ENCODE measurements at regions of chr16 and their contacts with region 1.

Region 1: DNA sequence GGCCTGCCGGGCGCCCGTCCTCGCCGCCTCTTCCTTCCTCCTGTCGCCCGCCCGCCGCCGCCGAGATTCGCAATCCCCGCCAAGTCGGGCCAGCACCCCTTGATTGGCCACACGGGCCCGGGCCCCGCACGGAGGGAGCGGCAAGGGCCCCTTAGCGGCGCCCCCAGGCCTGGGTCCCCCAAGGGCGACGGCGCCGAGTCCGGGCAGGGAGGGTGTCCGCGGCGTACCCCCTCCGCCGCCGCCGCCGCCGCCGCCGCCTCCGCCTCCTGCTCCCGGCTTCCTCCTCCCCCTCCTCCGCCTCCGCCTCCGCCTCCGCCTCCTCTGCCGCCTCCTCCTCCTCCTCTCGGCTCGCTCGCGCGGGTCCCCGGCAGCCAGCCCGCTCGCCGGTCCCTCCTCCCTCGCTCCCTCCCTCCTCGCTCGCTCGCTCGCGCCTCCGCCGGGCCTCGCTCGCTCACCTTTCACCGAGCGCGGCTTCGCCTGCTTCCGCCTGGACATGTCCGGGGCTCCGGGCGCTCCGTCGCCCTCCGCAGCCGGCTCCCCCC is 561 bp downstream of the ZNF423 start:
- DNase-seq: peak; percentile 56 to 86
- H3K4me3 ChIP-seq: peak overlapping the region; percentile 52 to 85 (median 67)
- H3K27ac ChIP-seq: peak overlapping the region; percentile 46; the same call in 1 of the 2 replicates
- H3K4me1 ChIP-seq: peaks cover 13 to 31% (median 24%) of the 10 kb centered on the region in 4 experiments
- H3K27me3 ChIP-seq: peaks cover 0 to 28% (median 19%) of the 10 kb centered on the region in 4 experiments; a peak in 5 of 7 replicates
- CTCF ChIP-seq: no peak
- EP300 ChIP-seq: no peak
- POLR2A ChIP-seq: no peak; a peak in 1 of 3 replicates
- RAD21 ChIP-seq: 0 out of 4 replicates have a peak, but pooled peaks of 1 of the 2 experiments have one; percentile 1

Region 2: DNA sequence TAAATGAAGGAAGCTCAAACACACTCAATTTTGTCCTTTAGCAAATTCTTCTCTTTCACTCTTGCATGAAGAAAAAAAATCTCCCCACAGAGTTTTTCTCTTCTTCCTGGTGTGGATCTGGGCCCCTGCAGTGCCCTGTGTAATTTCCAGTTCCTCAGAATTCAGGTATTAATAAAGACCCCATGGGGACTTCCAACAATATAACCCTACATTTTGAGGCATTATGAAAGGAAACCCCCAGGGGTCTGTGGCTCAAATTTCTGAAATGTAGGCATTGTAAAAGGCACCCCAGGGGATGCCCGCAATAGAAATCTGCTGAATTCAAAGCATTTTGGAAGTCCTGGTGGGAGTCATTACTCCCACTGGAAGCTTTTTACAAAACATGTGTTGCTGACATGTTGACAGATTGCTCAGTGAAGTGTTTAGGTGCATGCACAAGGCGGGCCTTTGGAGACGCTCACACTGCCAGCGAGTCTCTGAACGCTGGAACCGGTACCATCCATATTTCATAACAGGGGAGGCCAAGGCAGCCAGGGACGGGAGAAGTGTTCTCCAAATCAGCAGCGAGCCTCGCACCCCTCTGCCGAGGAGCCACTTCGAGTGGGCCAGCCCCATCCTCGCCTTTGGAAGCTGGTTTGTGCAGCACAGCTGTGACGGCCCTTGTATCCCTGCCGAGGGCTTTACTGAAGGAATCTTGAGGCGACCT is 153.4 kb before region 1 on chr16:
- CTCF ChIA-PET with region 1: interaction called, 10 read pairs
- POLR2A ChIA-PET with region 1: no interaction called
- DNase-seq: peak in 1 of 2 experiments; percentile 74
- H3K4me3 ChIP-seq: peak overlapping the region in 3 of 4 experiments; percentile 3 to 47 (median 21); a peak in 4 of 8 replicates
- H3K27ac ChIP-seq: peak overlapping the region; percentile 79; the same call in 1 of the 2 replicates
- H3K4me1 ChIP-seq: peaks cover 51 to 66% (median 57%) of the 10 kb centered on the region in 4 experiments
- H3K27me3 ChIP-seq: no peaks in the 10 kb centered on the region
- CTCF ChIP-seq: no peak
- EP300 ChIP-seq: peak in 1 of 2 experiments; percentile 97; a peak in 2 of 3 replicates
- POLR2A ChIP-seq: no peak
- RAD21 ChIP-seq: no peak

Region 3: DNA sequence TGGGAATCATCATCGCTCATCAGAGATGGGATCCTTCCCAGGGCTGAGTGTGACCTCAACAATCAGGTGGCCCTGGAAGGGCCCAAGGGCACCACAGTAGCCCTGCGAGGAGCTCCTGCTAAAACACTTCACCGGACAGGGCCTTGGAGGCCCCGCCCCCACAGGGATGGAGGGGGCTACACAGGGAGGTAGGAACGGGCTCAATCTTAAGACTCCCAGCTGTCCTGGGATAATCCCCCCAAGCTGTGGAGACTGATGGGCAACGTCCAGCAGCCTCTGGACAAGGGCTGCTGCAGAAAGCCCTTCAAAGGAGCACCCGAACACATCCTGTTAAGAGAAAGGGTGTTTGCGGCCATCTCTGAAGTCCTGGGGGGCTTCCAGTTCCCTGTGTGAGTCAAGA is 59.8 kb before region 1 on chr16:
- CTCF ChIA-PET with region 1: interaction called, 12 read pairs
- POLR2A ChIA-PET with region 1: interaction called, 3 read pairs
- DNase-seq: no peak
- H3K4me3 ChIP-seq: no peak overlapping the region
- H3K27ac ChIP-seq: no peak overlapping the region
- H3K4me1 ChIP-seq: peaks cover 0 to 12% (median 3%) of the 10 kb centered on the region in 4 experiments; a peak in 6 of 7 replicates
- H3K27me3 ChIP-seq: no peaks in the 10 kb centered on the region
- CTCF ChIP-seq: no peak
- EP300 ChIP-seq: no peak
- POLR2A ChIP-seq: no peak
- RAD21 ChIP-seq: no peak

Region 4: GRCh38 chr16:49821614-49822282 is 33.6 kb before region 1 on chr16:
- CTCF ChIA-PET with region 1: interaction called, 17 read pairs
- POLR2A ChIA-PET with region 1: interaction called, 3 read pairs
- DNase-seq: no peak
- H3K4me3 ChIP-seq: no peak overlapping the region
- H3K27ac ChIP-seq: no peak overlapping the region; the same call in 1 of the 2 replicates
- H3K4me1 ChIP-seq: peaks cover 9 to 21% (median 15%) of the 10 kb centered on the region in 4 experiments
- H3K27me3 ChIP-seq: no peaks in the 10 kb centered on the region
- CTCF ChIP-seq: no peak
- EP300 ChIP-seq: no peak
- POLR2A ChIP-seq: no peak
- RAD21 ChIP-seq: no peak

Region 5: DNA sequence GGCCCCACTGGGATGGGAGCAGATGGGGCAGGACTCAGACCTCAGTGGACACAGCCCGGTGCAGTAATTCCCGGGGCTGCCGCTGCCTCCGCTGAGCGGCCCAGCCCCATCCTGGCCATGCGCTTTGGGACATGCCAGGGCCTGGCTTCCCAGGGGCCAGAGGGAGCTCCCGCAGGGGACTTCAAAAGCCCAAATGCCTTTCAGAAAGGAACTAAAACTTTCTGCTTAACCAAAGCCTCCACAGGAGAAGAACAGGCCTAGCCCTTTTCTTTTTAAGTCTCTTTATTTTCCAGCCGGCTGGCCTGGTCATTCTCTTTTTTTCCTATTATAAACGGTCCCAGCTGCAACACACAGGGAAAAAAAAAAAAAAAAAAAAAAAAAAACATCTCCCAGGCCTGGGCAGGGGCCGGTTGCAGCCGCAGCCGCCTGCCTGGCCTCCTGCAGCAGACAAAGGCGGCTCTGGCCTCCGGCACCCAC is 11.3 kb after region 1 on chr16:
- CTCF ChIA-PET with region 1: interaction called, 126 read pairs
- POLR2A ChIA-PET with region 1: interaction called, 5 read pairs
- DNase-seq: peak in 1 of 2 experiments; percentile 63
- H3K4me3 ChIP-seq: peak overlapping the region in 1 of 4 experiments; percentile 2; a peak in 1 of 8 replicates
- H3K27ac ChIP-seq: no peak overlapping the region
- H3K4me1 ChIP-seq: peaks cover 7 to 21% (median 16%) of the 10 kb centered on the region in 4 experiments
- H3K27me3 ChIP-seq: peaks cover 0 to 6% (median 2%) of the 10 kb centered on the region in 4 experiments; a peak in 4 of 7 replicates
- CTCF ChIP-seq: no peak
- EP300 ChIP-seq: no peak
- POLR2A ChIP-seq: no peak
- RAD21 ChIP-seq: peak; percentile 5 to 19; a peak in 1 of 4 replicates

Region 6: DNA sequence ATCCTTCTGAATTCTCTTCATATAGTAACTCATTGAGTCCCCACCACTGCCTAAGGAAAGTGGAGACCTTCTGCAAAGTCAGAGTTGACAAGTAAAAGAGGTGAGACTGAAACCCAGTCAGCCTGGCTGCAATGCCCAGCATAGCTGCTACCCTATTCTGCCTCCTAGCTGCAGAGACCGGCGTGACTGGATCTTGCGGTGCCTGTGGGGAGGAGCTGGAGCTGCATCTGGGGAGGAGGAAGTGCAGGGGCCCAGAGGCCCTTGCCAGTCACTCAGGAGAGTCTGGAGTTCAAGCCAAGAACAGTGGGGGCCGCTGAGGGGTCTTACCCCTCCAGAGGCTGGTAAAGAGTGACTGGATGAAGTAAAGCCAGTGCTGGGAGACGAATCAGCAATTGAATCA is 35.5 kb after region 1 on chr16:
- CTCF ChIA-PET with region 1: interaction called, 31 read pairs
- POLR2A ChIA-PET with region 1: no interaction called
- DNase-seq: peak; percentile 38 to 84
- H3K4me3 ChIP-seq: no peak overlapping the region
- H3K27ac ChIP-seq: no peak overlapping the region
- H3K4me1 ChIP-seq: no peaks in the 10 kb centered on the region; a peak in 1 of 7 replicates
- H3K27me3 ChIP-seq: no peaks in the 10 kb centered on the region; a peak in 1 of 7 replicates
- CTCF ChIP-seq: peak; percentile 92 to 96 (median 93)
- EP300 ChIP-seq: no peak
- POLR2A ChIP-seq: no peak
- RAD21 ChIP-seq: peak; percentile 83 to 87

Region 7: GRCh38 chr16:49921791-49922456 is 66.6 kb after region 1 on chr16:
- CTCF ChIA-PET with region 1: interaction called, 76 read pairs
- POLR2A ChIA-PET with region 1: interaction called, 5 read pairs
- DNase-seq: peak; percentile 63 to 87
- H3K4me3 ChIP-seq: no peak overlapping the region
- H3K27ac ChIP-seq: no peak overlapping the region
- H3K4me1 ChIP-seq: peaks cover 0 to 4% (median 1%) of the 10 kb centered on the region in 4 experiments; a peak in 5 of 7 replicates
- H3K27me3 ChIP-seq: no peaks in the 10 kb centered on the region; a peak in 1 of 7 replicates
- CTCF ChIP-seq: peak; percentile 76 to 95 (median 93)
- EP300 ChIP-seq: no peak; a peak in 1 of 3 replicates
- POLR2A ChIP-seq: no peak
- RAD21 ChIP-seq: peak; percentile 93 to 96

Region 8: DNA sequence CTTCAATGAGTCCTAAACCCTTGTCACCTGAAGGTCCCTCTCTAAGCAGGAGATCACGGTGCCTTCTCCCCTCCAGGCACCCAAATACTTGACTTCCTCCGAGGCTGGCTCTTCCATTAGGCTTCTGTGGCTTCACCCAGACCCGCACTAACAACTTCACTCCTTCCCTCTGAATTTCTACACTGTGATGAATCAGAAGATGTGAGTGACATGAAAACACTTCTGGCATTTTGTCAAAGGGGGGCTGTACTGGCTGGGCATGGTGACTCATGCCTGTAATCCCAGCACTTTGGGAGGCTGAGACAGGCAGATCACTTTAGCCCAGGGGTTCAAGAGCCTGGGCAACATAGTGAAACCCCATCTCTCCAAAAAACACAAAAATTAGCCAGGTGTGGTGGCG is 97.0 kb after region 1 on chr16:
- CTCF ChIA-PET with region 1: no interaction called
- POLR2A ChIA-PET with region 1: no interaction called
- DNase-seq: no peak
- H3K4me3 ChIP-seq: no peak overlapping the region
- H3K27ac ChIP-seq: no peak overlapping the region
- H3K4me1 ChIP-seq: no peaks in the 10 kb centered on the region
- H3K27me3 ChIP-seq: no peaks in the 10 kb centered on the region
- CTCF ChIP-seq: no peak
- EP300 ChIP-seq: no peak
- POLR2A ChIP-seq: no peak
- RAD21 ChIP-seq: no peak